ENCODE measurements at regions of chr17 and their contacts with region 1.

Region 1: GRCh38 chr17:80978499-80979497 is 12.8 kb upstream of the CHMP6 start:
- DNase-seq: no peak
- H3K4me3 ChIP-seq: no peak overlapping the region
- H3K27ac ChIP-seq: no peak overlapping the region
- H3K4me1 ChIP-seq: peaks cover 0 to 8% (median 1%) of the 10 kb centered on the region in 4 experiments; a peak in 4 of 7 replicates
- H3K27me3 ChIP-seq: peaks cover 0 to 9% (median 4%) of the 10 kb centered on the region in 4 experiments; a peak in 4 of 7 replicates
- CTCF ChIP-seq: no peak
- EP300 ChIP-seq: no peak
- POLR2A ChIP-seq: no peak
- RAD21 ChIP-seq: no peak

Region 2: GRCh38 chr17:80964859-80965580 is 13.8 kb before region 1 on chr17:
- CTCF ChIA-PET with region 1: interaction called, 13 read pairs
- POLR2A ChIA-PET with region 1: interaction called, 4 read pairs
- DNase-seq: no peak
- H3K4me3 ChIP-seq: no peak overlapping the region
- H3K27ac ChIP-seq: no peak overlapping the region
- H3K4me1 ChIP-seq: peaks cover 0 to 3% (median 0%) of the 10 kb centered on the region in 4 experiments; a peak in 2 of 7 replicates
- H3K27me3 ChIP-seq: no peaks in the 10 kb centered on the region
- CTCF ChIP-seq: peak in 2 of 3 experiments; percentile 14; a peak in 2 of 4 replicates
- EP300 ChIP-seq: no peak
- POLR2A ChIP-seq: no peak
- RAD21 ChIP-seq: no peak

Region 3: DNA sequence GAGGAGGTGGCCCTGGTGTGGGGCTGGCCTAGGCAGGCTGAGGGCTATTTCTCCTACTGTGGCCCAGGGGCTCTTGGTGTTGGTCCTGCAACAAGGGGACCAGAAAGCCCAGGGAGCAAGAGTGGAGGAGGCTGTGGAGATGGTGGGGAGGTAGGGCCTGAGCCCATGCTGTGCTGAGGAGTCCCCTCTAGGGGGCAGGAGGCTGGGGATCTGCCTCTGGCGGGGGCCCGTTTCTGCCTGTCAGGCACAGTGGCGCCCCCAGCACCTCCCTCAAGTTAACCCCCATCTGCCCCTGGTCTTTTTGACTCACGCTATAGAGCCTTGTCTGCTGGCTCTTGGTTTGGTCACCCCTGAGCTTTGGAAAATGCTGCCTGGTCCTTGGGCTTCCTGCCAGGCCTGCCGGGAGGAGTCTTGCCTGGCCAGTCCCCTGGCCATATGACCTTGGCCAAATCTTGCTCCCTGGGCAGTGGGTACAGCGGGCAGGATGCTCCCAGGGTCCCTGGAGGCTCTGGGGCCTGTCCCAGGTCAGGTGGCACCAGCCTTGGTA is 62.1 kb after region 1 on chr17:
- CTCF ChIA-PET with region 1: no interaction called
- POLR2A ChIA-PET with region 1: no interaction called
- DNase-seq: peak in 1 of 2 experiments; percentile 78
- H3K4me3 ChIP-seq: no peak overlapping the region
- H3K27ac ChIP-seq: no peak overlapping the region
- H3K4me1 ChIP-seq: peaks cover 0 to 17% (median 6%) of the 10 kb centered on the region in 4 experiments; a peak in 6 of 7 replicates
- H3K27me3 ChIP-seq: peaks cover 0 to 6% (median 0%) of the 10 kb centered on the region in 4 experiments; a peak in 3 of 7 replicates
- CTCF ChIP-seq: peak; percentile 73 to 91 (median 75)
- EP300 ChIP-seq: no peak
- POLR2A ChIP-seq: no peak
- RAD21 ChIP-seq: peak; percentile 42 to 44; a peak in 2 of 4 replicates

Region 4: GRCh38 chr17:81076141-81076679 is 97.4 kb after region 1 on chr17:
- CTCF ChIA-PET with region 1: no interaction called
- POLR2A ChIA-PET with region 1: no interaction called
- DNase-seq: no peak
- H3K4me3 ChIP-seq: no peak overlapping the region
- H3K27ac ChIP-seq: no peak overlapping the region
- H3K4me1 ChIP-seq: peaks cover 0 to 10% (median 3%) of the 10 kb centered on the region in 4 experiments; a peak in 3 of 7 replicates
- H3K27me3 ChIP-seq: no peaks in the 10 kb centered on the region
- CTCF ChIP-seq: no peak
- EP300 ChIP-seq: no peak
- POLR2A ChIP-seq: no peak
- RAD21 ChIP-seq: no peak